ENCODE measurements at regions of chr15 and their contacts with region 1.

Region 1: GRCh38 chr15:70810916-70811578 is 42.9 kb downstream of the LARP6 start:
- DNase-seq: no peak
- ATAC-seq: no peak
- H3K4me3 ChIP-seq: no peak overlapping the region
- H3K27ac ChIP-seq: no peak overlapping the region
- H3K4me1 ChIP-seq: no peaks in the 10 kb centered on the region
- H3K27me3 ChIP-seq: no peaks in the 10 kb centered on the region
- CTCF ChIP-seq: no peak

Region 2: GRCh38 chr15:70679919-70680231 is 131.2 kb before region 1 on chr15:
- intact Hi-C with region 1: loop called in 1 of 3 experiments (anchors 5 kb)
- DNase-seq: no peak
- ATAC-seq: no peak
- H3K4me3 ChIP-seq: no peak overlapping the region
- H3K27ac ChIP-seq: no peak overlapping the region
- H3K4me1 ChIP-seq: peaks cover 0 to 5% (median 0%) of the 10 kb centered on the region in 3 donors
- H3K27me3 ChIP-seq: no peaks in the 10 kb centered on the region
- CTCF ChIP-seq: peak in 1 of 4 donors; percentile 1

Region 3: GRCh38 chr15:71125831-71126453 is 314.9 kb after region 1 on chr15:
- intact Hi-C with region 1: no loop called
- DNase-seq: no peak
- ATAC-seq: no peak
- H3K4me3 ChIP-seq: no peak overlapping the region
- H3K27ac ChIP-seq: no peak overlapping the region
- H3K4me1 ChIP-seq: no peaks in the 10 kb centered on the region
- H3K27me3 ChIP-seq: no peaks in the 10 kb centered on the region
- CTCF ChIP-seq: no peak

Measured in pancreas (tissue), 10 donors.